ENCODE measurements at regions of chr9 and their contacts with region 1.

Region 1: DNA sequence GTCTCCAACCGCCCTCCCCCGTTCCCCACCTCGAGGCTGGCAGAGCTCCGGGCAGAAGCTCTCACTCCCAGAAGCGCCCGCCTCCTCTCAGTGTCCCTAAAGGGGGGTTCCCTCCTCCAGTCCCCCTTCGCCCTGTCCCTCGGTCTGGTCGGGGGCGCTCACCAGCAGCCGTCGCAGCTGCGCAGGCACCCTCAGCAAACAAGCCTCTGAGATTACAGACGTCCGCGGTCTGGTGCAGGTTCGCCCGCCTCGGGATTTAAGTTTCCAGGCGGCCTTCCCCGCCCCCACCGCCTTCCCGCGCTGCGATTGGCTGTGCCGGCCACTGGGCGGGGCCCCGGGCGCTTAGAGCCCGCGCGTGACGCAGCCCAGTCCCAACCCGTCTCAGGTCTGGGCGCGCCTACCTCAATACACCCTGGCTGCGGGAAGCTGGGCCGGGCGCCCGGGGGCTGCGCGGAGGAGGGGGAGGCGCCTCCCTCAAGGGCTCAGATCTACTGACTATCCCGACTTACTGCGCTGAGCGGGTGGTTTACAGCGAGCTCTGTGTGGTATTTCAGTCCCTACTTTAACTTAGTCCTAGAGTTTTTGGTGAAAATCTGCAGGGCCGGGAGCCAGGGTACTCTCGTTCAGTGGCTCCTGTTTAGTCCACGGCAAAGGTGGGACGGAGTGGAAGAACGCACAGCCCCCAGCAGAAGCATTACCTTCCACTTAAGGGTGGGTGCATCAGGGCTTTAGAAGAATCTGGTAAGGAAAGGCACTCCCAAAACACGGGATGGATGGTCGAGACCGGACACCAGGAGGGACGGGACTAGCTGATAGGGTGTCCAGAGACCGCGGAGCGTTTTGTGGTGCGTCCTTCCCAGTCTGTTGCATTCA is at the start of gene CTSV:
- DNase-seq: peak; percentile 96

Region 2: DNA sequence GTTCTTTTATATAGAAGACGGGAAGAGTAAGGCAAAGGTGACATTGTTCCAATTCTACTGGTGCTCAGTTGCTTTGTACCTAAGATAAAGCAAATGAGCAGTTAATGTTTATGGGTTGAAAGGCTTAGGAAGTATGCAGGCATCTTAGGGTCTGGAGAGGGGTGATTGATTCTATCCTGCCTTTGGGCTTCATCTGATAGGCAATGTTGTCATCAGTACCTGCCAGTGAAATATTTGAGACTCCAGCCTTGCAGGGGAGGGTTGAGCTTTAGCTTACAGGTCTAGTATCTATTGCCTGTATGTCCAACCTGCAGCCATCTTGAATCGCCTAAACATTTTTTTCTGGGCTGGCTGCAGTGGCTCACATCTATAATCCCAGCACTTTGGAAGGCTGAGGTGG is 13.6 kb after region 1 on chr9:
- CTCF ChIA-PET with region 1: no interaction called
- POLR2A ChIA-PET with region 1: interaction called, 11 read pairs
- DNase-seq: no peak

Measured in HEK293T (cell line).